GM23248 (cell line): ENCODE measurements at regions of chr1 and their contacts with region 1.

Region 1: DNA sequence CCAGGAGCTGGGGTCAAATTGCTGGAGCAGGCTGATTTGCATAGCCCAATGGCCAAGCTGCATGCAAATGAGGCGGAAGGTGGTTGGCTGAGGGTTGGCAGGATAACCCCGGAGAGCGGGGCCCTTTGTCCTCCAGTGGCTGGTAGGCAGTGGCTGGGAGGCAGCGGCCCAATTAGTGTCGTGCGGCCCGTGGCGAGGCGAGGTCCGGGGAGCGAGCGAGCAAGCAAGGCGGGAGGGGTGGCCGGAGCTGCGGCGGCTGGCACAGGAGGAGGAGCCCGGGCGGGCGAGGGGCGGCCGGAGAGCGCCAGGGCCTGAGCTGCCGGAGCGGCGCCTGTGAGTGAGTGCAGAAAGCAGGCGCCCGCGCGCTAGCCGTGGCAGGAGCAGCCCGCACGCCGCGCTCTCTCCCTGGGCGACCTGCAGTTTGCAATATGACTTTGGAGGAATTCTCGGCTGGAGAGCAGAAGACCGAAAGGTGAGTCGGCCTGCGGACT is at the start of gene GADD45A:
- DNase-seq: peak; percentile 99
- H3K4me3 ChIP-seq: peak within 1 kb of the TSS; percentile 96
- H3K27ac ChIP-seq: peak within 1 kb of the TSS; percentile 97
- H3K4me1 ChIP-seq: peaks cover 49% of the 10 kb centered on the region
- H3K27me3 ChIP-seq: no peaks in the 10 kb centered on the region
- total RNA-seq, gene GADD45A: 59.4 and 72.8 TPM in 2 replicates

Region 2: DNA sequence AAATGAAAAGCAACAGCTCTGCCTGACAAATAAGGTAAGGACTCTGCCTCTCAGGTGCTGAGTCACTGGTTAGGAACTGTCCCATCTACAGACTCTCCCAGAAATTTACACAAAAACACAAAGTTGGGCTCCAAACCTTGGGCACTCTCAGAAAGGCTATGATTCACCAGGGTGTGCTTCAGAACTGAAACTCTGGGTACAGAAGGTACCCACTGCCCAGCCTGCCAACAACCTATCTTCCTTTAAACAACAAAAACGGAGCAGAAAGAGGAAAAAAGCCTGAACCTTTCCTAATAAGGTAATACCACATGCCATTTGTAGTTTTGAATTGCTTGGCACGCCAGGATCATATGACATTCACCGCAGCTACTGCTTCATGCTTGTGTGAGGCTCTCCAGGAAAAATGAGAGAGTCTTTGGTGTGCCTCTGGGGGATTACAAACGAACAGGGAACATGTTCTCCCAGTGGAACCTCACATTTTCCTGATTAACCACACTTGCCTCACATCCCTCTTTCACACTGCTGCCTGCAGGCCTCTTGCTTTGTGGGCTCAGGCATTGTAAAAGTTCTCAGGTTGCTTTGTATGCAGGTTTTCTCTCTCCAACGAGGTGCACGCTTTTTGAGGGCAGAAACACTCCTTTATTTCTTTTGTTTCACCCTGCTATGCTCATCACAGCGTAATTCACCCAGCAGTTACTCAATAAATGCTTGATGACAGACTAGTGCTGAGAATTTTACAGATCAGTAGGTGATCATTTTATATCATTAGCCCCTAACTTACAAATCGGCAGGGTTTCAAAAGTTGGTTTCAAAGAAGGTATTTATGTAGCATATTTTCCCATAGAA is 65.0 kb after region 1 on chr1:
- in situ Hi-C with region 1: loop called (anchors 10 kb)
- DNase-seq: peak; percentile 91
- H3K4me3 ChIP-seq: peak overlapping the region; percentile 50
- H3K27ac ChIP-seq: peak overlapping the region; percentile 86
- H3K4me1 ChIP-seq: peaks cover 77% of the 10 kb centered on the region
- H3K27me3 ChIP-seq: no peaks in the 10 kb centered on the region

Region 3: GRCh38 chr1:68347415-68347814 is 662.3 kb after region 1 on chr1:
- in situ Hi-C with region 1: no loop called
- DNase-seq: no peak
- H3K4me3 ChIP-seq: no peak overlapping the region
- H3K27ac ChIP-seq: no peak overlapping the region
- H3K4me1 ChIP-seq: no peaks in the 10 kb centered on the region
- H3K27me3 ChIP-seq: no peaks in the 10 kb centered on the region